Activated CD8-positive, alpha-beta memory T cell treated with anti-CD3 and anti-CD28 coated beads, Interleukin-2, amount 10 ng/mL, durations not matched to agents 7 days and 5 days (primary cell): ENCODE measurements at regions of chr3 and their contacts with region 1.

Region 1: GRCh38 chr3:122415720-122416654 is at the start of gene WDR5B:
- DNase-seq: peak; percentile 99
- ATAC-seq: peak; percentile 93
- H3K4me3 Mint-ChIP-seq: peak within 1 kb of the TSS; percentile 95
- H3K27ac Mint-ChIP-seq: peak within 1 kb of the TSS; percentile 95
- H3K4me1 Mint-ChIP-seq: peaks cover 49% of the 10 kb centered on the region
- H3K27me3 Mint-ChIP-seq: no peaks in the 10 kb centered on the region
- total RNA-seq, gene WDR5B: 4.6 to 4.8 TPM

Region 2: GRCh38 chr3:122383771-122384697 is 32.0 kb before region 1 on chr3 and contains the start of gene FAM162A:
- CTCF ChIA-PET with region 1: interaction called, 23 read pairs
- DNase-seq: peak; percentile 95
- ATAC-seq: peak; percentile 97
- H3K4me3 Mint-ChIP-seq: peak within 1 kb of the TSS; percentile 91
- H3K27ac Mint-ChIP-seq: peak within 1 kb of the TSS; percentile 92
- H3K4me1 Mint-ChIP-seq: peaks cover 58% of the 10 kb centered on the region
- H3K27me3 Mint-ChIP-seq: no peaks in the 10 kb centered on the region
- total RNA-seq, gene FAM162A: 51.3 to 63.9 TPM

Region 3: GRCh38 chr3:122392868-122393844 is 22.8 kb before region 1 on chr3:
- CTCF ChIA-PET with region 1: interaction called, 16 read pairs
- DNase-seq: no peak
- ATAC-seq: no peak
- H3K4me3 Mint-ChIP-seq: no peak overlapping the region
- H3K27ac Mint-ChIP-seq: no peak overlapping the region
- H3K4me1 Mint-ChIP-seq: peaks cover 37% of the 10 kb centered on the region
- H3K27me3 Mint-ChIP-seq: no peaks in the 10 kb centered on the region